Posterior vena cava (tissue), 2 donors: ENCODE measurements at regions of chr3 and their contacts with region 1.

Region 1: GRCh38 chr3:128697341-128697740 is 28.6 kb upstream of the RAB7A start:
- DNase-seq: no peak

Region 2: DNA sequence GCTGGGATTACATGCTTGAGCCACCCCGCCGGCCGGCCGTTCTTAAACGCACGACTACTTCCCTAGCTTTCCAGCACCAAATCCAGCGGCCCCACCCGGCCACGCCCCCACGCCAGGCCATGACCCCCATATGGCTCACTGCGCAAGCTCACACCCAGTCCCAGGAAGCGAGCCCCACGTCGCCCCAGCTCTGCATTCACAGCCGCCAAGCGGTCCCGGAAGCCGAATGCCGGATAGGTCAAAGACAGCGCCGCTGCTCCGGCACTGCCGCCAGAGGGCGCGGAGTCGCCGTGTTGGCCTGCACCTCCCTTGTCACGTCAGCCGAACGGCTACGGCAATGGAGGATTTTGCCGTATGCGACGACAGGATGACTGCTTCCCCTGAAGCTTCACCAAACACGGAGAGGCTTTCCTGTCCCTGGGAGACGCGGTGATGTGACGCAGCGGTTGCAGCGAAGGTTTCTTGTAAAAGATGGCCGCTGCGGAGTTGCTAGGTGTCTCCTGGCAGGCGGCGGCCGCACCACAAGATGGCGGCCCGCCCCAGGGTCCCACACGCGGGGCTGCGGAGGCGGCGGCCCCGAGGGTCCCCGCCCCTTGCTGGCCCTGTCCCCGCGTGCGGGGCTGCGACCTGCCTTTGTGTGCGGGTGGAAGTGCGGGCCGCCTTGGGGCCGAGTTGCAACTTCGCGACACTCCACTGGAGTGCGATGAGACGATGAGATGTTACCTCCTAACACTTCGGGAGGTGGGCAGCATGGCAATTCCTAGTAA is 16.6 kb before region 1 on chr3:
- intact Hi-C with region 1: loop called in 1 of 2 experiments (anchors 1 kb)
- DNase-seq: peak; percentile 100

Region 3: DNA sequence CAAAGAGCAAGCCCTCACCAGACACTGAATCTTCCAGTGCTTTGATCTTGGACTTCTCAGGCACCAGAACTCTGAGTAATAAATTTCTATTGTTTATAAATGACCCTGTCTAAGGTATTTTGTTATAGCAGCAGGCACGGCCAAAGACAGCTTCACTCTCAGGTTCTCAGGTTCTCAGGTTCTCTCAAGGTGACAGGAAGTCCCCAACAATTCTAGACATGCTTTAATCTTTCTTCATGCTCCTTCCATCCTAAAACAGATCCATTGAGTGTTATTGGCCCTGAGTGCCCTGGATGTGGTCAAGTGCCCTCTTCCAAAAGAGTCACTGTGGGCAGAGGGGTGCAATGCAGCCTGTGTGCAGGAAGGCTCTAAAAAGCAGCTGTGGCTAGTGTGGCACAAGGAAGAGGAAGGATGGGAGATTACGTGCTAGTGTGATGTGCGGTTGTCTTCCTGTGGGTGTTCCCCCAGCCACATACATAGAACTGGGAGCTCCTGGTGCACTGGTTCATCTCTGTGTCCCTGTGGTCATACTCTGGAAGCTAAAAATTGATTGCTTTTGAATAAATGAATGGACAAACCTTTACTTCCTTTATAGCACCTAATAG is 17.6 kb after region 1 on chr3:
- intact Hi-C with region 1: no loop called
- DNase-seq: peak; percentile 44

Region 4: GRCh38 chr3:129950318-129951046 is 1253.1 kb after region 1 on chr3:
- intact Hi-C with region 1: no loop called
- DNase-seq: no peak